ENCODE measurements at regions of chr3 and their contacts with region 1.

Region 1: GRCh38 chr3:32106280-32106928 is at the start of gene GPD1L:
- DNase-seq: peak; percentile 96
- ATAC-seq: peak; percentile 99
- H3K4me3 Mint-ChIP-seq: peak within 1 kb of the TSS; percentile 92
- H3K27ac Mint-ChIP-seq: peak within 1 kb of the TSS; percentile 90
- H3K4me1 Mint-ChIP-seq: peaks cover 30% of the 10 kb centered on the region
- H3K27me3 Mint-ChIP-seq: no peaks in the 10 kb centered on the region
- total RNA-seq, gene GPD1L: 6.6 to 10.1 TPM

Region 2: DNA sequence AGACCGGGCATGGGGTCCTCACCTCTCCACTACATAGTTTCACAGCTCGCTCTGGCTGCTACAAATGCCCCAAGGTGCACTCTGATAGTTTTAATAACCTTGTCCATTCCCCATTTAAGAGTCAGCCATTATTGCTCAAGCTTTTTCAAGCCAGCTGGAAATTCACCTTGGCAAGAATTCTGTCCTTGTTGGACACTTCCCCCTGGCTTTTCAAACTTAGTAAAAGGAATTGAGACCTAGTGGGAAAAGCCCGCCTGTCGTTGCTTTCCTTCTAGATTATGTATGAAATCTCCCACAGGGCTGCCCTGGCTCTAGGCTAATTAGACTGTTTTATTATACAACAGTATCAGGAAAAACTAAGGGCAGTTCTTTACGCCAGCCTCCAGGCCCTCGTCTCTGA is 918.3 kb before region 1 on chr3:
- CTCF ChIA-PET with region 1: no interaction called
- POLR2A ChIA-PET with region 1: no interaction called
- intact Hi-C with region 1: no loop called
- DNase-seq: no peak
- ATAC-seq: no peak
- H3K4me3 Mint-ChIP-seq: no peak overlapping the region
- H3K27ac Mint-ChIP-seq: no peak overlapping the region
- H3K4me1 Mint-ChIP-seq: peaks cover 1% of the 10 kb centered on the region
- H3K27me3 Mint-ChIP-seq: no peaks in the 10 kb centered on the region

Region 3: GRCh38 chr3:31981206-31982181 is 124.9 kb before region 1 on chr3 and contains the starts of genes OSBPL10 and ZNF860:
- CTCF ChIA-PET with region 1: no interaction called
- POLR2A ChIA-PET with region 1: no interaction called
- intact Hi-C with region 1: loop called in 1 of 2 experiments (anchors 1 kb)
- DNase-seq: peak; percentile 58
- ATAC-seq: peak; percentile 44
- H3K4me3 Mint-ChIP-seq: peak within 1 kb of the TSS; percentile 74
- H3K27ac Mint-ChIP-seq: peak within 1 kb of the TSS; percentile 53
- H3K4me1 Mint-ChIP-seq: peaks cover 20% of the 10 kb centered on the region
- H3K27me3 Mint-ChIP-seq: peaks cover 39% of the 10 kb centered on the region
- total RNA-seq, gene OSBPL10: 11.2 to 11.8 TPM
- total RNA-seq, gene ZNF860: 0.11 to 0.30 TPM

Region 4: DNA sequence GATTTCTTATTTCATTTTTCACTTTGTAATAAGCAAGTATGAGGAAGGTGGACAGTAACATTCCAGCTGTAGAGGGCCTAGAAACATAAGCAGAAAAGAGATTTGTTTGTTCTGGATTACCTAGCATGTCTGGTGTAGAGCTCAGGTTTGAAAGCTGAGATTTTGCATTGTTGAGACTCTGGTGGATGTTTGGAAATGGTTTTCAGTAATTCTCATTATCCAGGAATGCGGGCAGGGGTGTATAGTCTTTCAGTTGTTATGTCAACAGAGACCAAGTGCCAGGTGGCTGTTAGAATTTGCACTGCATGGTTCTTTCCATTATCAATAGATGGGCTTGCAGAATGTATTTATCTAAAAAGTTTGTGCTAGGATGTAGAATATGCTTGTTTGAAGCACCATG is 10.9 kb after region 1 on chr3:
- CTCF ChIA-PET with region 1: interaction called, 4 read pairs
- POLR2A ChIA-PET with region 1: interaction called, 4 read pairs
- intact Hi-C with region 1: loop called (anchors 1 kb)
- DNase-seq: no peak
- ATAC-seq: no peak
- H3K4me3 Mint-ChIP-seq: no peak overlapping the region
- H3K27ac Mint-ChIP-seq: no peak overlapping the region
- H3K4me1 Mint-ChIP-seq: peaks cover 55% of the 10 kb centered on the region
- H3K27me3 Mint-ChIP-seq: no peaks in the 10 kb centered on the region

Region 5: GRCh38 chr3:32238453-32239306 is 132.3 kb after region 1 on chr3 and contains the start of gene CMTM8:
- CTCF ChIA-PET with region 1: interaction called, 3 read pairs
- POLR2A ChIA-PET with region 1: no interaction called
- intact Hi-C with region 1: loop called in 1 of 2 experiments (anchors 2 kb)
- DNase-seq: peak; percentile 84
- ATAC-seq: peak; percentile 86
- H3K4me3 Mint-ChIP-seq: peak within 1 kb of the TSS; percentile 82
- H3K27ac Mint-ChIP-seq: peak within 1 kb of the TSS; percentile 45
- H3K4me1 Mint-ChIP-seq: peaks cover 27% of the 10 kb centered on the region
- H3K27me3 Mint-ChIP-seq: peaks cover 8% of the 10 kb centered on the region
- total RNA-seq, gene CMTM8: 8.1 to 9.3 TPM

Region 6: GRCh38 chr3:32502118-32502945 is 395.9 kb after region 1 on chr3 and contains the start of gene CMTM6:
- CTCF ChIA-PET with region 1: no interaction called
- POLR2A ChIA-PET with region 1: no interaction called
- intact Hi-C with region 1: loop called in 1 of 2 experiments (anchors 2 kb)
- DNase-seq: peak; percentile 87
- ATAC-seq: peak; percentile 80
- H3K4me3 Mint-ChIP-seq: peak within 1 kb of the TSS; percentile 86
- H3K27ac Mint-ChIP-seq: peak within 1 kb of the TSS; percentile 95
- H3K4me1 Mint-ChIP-seq: peaks cover 29% of the 10 kb centered on the region
- H3K27me3 Mint-ChIP-seq: no peaks in the 10 kb centered on the region
- total RNA-seq, gene CMTM6: 33.6 to 48.0 TPM

Region 7: GRCh38 chr3:32570421-32571191 is 464.2 kb after region 1 on chr3 and contains the start of gene DYNC1LI1:
- CTCF ChIA-PET with region 1: no interaction called
- POLR2A ChIA-PET with region 1: no interaction called
- intact Hi-C with region 1: loop called (anchors 2 to 10 kb)
- DNase-seq: peak; percentile 96
- ATAC-seq: peak; percentile 96
- H3K4me3 Mint-ChIP-seq: peak within 1 kb of the TSS; percentile 78
- H3K27ac Mint-ChIP-seq: peak within 1 kb of the TSS; percentile 90
- H3K4me1 Mint-ChIP-seq: peaks cover 28% of the 10 kb centered on the region
- H3K27me3 Mint-ChIP-seq: no peaks in the 10 kb centered on the region
- total RNA-seq, gene DYNC1LI1: 31.8 to 31.9 TPM

Region 8: DNA sequence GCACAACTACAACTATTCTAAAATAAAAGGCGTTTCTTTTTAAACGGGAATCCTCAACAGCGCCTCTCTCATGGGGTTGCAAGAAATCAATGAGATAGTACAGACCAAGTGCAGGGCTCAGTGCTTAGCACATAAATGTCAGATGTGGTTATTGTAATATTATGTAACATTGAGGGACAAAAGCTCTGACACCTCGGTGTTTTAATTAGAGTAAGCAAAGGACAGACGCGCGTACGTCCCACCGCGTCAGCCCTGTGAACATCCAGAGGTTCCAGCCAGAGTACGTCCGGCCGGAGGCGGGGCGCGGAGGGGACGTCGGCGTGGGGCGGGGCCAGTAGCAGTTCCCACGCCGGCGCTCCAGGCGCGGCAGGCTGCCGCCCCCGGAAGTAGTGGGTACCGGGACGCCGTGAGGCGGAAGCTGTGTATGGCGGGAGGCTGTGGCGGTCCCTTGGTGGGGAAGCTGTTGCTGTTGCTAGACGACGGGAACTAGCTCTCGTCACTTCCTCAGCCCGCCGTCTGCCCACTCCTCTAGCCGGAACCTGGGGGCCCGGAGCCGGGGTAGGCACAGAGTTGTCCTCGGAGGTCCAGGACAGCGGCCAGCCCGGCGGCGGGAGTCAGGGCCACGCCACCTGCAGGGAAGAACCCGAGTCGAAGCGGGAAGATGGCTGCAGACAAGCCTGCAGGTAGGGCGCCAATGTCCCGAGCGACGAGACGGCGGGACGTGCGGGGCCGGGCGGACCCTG is 578.6 kb after region 1 on chr3 and contains the start of gene CNOT10:
- CTCF ChIA-PET with region 1: no interaction called
- POLR2A ChIA-PET with region 1: no interaction called
- intact Hi-C with region 1: loop called in 1 of 2 experiments (anchors 1 kb)
- DNase-seq: peak; percentile 98
- ATAC-seq: peak; percentile 96
- H3K4me3 Mint-ChIP-seq: peak within 1 kb of the TSS; percentile 88
- H3K27ac Mint-ChIP-seq: peak within 1 kb of the TSS; percentile 91
- H3K4me1 Mint-ChIP-seq: peaks cover 32% of the 10 kb centered on the region
- H3K27me3 Mint-ChIP-seq: no peaks in the 10 kb centered on the region
- total RNA-seq, gene CNOT10: 57.7 to 76.9 TPM